ENCODE measurements at regions of chrX and their contacts with region 1.

Region 1: DNA sequence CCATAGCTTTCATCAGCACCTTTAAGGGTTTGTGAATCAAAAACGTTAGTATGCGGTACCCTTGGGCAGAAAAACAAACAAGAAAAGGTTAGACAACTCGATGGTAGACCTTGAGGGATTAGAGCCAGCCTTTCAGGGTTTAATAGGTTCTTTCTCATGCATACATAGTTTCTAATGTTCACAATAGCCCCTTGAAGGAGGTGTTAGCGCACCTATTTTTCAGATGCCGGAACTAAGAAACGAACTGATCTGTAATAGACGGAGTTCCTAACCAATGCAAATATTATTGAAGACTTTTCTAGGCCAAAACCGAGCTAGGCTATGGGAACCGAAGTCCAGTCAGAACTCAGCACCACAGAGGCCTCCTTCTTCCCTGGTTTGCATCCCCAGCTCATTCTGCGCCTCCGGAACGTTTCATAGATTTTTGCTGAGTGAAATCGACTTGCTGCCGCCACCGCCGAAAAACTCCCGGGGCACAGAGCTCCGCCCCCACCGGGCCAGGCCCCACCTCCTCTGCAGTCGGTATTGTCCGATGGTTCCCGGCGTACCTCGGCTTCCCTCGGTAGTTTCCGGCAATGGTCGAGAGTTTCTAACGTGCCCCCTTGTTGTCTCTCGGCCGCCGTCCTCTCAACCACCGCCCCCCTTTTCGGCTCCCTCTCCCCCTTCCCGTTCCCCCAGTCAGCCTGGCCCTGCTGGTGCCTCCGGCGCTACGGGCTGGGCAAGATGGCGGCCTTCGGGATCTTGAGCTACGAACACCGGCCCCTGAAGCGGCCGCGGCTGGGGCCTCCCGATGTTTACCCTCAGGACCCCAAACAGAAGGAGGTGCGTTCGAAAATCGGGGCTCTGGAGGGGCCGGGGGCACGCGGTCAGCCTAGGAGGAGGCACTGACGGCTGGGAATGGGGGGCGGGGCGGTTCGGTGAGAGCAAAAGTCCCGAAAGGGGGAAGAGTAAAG is at the start of gene MED12:
- DNase-seq: peak; percentile 84 to 89
- ATAC-seq: peak; percentile 97 to 100 (median 99)
- H3K4me3 ChIP-seq: peak within 1 kb of the TSS; percentile 38 to 72 (median 64)
- H3K27ac ChIP-seq: peak within 1 kb of the TSS; percentile 40 to 91 (median 78)
- H3K4me1 ChIP-seq: peaks cover 0 to 15% (median 5%) of the 10 kb centered on the region in 9 donors
- H3K27me3 ChIP-seq: peaks cover 0 to 3% (median 0%) of the 10 kb centered on the region in 7 donors
- CTCF ChIP-seq: no peak
- total RNA-seq, gene MED12: 22.4 to 35.1 (median 28.9) TPM

Region 2: DNA sequence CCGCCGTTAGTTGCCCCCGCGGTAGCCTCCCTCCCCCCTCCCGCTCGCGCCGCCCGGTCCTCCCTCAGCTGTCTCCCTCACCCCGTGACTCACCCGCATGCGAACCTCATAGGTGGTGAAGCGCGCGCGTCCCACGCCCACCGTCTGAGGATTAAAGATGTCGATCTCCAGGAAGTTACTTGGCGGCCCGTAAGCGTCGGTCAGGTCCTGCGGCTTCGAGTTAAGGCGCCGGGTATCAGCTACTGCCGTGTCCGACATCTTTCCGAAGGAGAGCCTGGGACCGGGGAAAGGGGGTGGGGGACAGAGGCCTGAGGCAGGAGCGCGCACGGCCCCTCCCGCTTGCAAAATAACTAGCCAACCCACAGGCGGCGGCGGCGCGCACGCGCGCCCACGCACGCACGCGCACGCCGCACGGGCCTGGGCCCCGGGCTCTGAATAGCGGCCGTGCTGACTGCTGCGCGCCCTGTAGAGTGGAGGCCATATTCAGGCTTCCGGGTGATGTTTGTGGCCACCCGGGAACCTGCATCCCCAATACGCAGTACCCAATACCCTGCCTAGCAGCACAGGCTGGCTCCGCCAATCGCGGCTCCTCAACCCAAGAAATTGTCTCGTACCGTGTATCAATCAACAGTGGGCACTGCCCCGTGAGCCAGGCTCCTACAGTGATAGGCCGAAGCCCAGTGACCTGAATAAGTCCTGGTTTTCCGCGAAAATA is 50.1 kb before region 1 on chrX and contains the start of gene SNX12:
- intact Hi-C with region 1: loop called in 1 of 10 experiments (anchors 1 kb)
- DNase-seq: peak; percentile 86 to 91
- ATAC-seq: peak; percentile 96 to 100 (median 98)
- H3K4me3 ChIP-seq: peak within 1 kb of the TSS; percentile 44 to 70 (median 65)
- H3K27ac ChIP-seq: peak within 1 kb of the TSS; percentile 35 to 88 (median 81)
- H3K4me1 ChIP-seq: peaks cover 0 to 12% (median 5%) of the 10 kb centered on the region in 9 donors
- H3K27me3 ChIP-seq: peaks cover 0 to 12% (median 0%) of the 10 kb centered on the region in 7 donors
- CTCF ChIP-seq: no peak
- total RNA-seq, gene SNX12: 41.5 to 54.0 (median 49.4) TPM

Measured in heart right ventricle (tissue), 16 donors.